Activated naive CD4-positive, alpha-beta T cell treated with anti-CD3 and anti-CD28 coated beads for 36 hours (primary cell): ENCODE measurements at regions of chr9 and their contacts with region 1.

Region 1: DNA sequence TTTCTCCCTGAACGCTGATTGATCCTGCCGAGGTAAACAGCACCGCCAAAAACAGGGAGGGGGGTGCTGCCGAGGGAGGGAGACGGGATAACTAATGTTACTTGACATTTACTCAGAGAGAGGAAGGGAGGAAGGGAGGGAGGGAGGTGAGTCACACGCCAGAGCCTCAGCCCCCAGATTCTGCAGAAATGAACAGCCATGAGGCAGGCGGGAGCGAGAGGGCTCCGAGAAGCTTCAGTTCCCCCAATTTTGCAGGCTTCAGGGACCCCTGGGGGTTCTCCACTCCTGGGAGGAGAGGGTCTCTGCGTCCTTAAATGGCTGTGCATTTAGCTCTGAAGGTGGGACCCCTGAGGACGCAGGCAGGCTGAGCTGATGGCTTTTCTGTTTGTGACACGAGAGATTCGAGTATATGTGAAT is 59.1 kb upstream of the IER5L start:
- DNase-seq: peak; percentile 83
- H3K4me3 Mint-ChIP-seq: peak overlapping the region; percentile 82
- H3K27ac Mint-ChIP-seq: peak overlapping the region; percentile 95
- H3K4me1 Mint-ChIP-seq: peaks cover 53% of the 10 kb centered on the region
- H3K27me3 Mint-ChIP-seq: no peaks in the 10 kb centered on the region

Region 2: GRCh38 chr9:128540634-128541360 is 696.4 kb before region 1 on chr9:
- CTCF ChIA-PET with region 1: no interaction called
- intact Hi-C with region 1: no loop called
- DNase-seq: no peak
- H3K4me3 Mint-ChIP-seq: no peak overlapping the region
- H3K27ac Mint-ChIP-seq: no peak overlapping the region
- H3K4me1 Mint-ChIP-seq: no peaks in the 10 kb centered on the region
- H3K27me3 Mint-ChIP-seq: no peaks in the 10 kb centered on the region

Region 3: GRCh38 chr9:128863647-128864046 is 373.6 kb before region 1 on chr9:
- CTCF ChIA-PET with region 1: no interaction called
- intact Hi-C with region 1: no loop called
- DNase-seq: peak; percentile 90
- H3K4me3 Mint-ChIP-seq: no peak overlapping the region
- H3K27ac Mint-ChIP-seq: no peak overlapping the region
- H3K4me1 Mint-ChIP-seq: peaks cover 9% of the 10 kb centered on the region
- H3K27me3 Mint-ChIP-seq: no peaks in the 10 kb centered on the region

Region 4: GRCh38 chr9:129202613-129203555 is 34.3 kb before region 1 on chr9:
- CTCF ChIA-PET with region 1: no interaction called
- intact Hi-C with region 1: loop called (anchors 2 kb)
- DNase-seq: peak; percentile 89
- H3K4me3 Mint-ChIP-seq: peak overlapping the region; percentile 65
- H3K27ac Mint-ChIP-seq: no peak overlapping the region
- H3K4me1 Mint-ChIP-seq: peaks cover 18% of the 10 kb centered on the region
- H3K27me3 Mint-ChIP-seq: no peaks in the 10 kb centered on the region

Region 5: GRCh38 chr9:129258124-129258822 is 21.1 kb after region 1 on chr9:
- CTCF ChIA-PET with region 1: no interaction called
- intact Hi-C with region 1: loop called (anchors 1 kb)
- DNase-seq: peak; percentile 90
- H3K4me3 Mint-ChIP-seq: peak overlapping the region; percentile 57
- H3K27ac Mint-ChIP-seq: no peak overlapping the region
- H3K4me1 Mint-ChIP-seq: peaks cover 28% of the 10 kb centered on the region
- H3K27me3 Mint-ChIP-seq: peaks cover 3% of the 10 kb centered on the region

Region 6: GRCh38 chr9:129336601-129337331 is 99.6 kb after region 1 on chr9:
- CTCF ChIA-PET with region 1: no interaction called
- intact Hi-C with region 1: loop called (anchors 2 kb)
- DNase-seq: peak; percentile 57
- H3K4me3 Mint-ChIP-seq: peak overlapping the region; percentile 64
- H3K27ac Mint-ChIP-seq: no peak overlapping the region
- H3K4me1 Mint-ChIP-seq: peaks cover 27% of the 10 kb centered on the region
- H3K27me3 Mint-ChIP-seq: no peaks in the 10 kb centered on the region